Panc1 (cell line): ENCODE measurements at regions of chr13 and their contacts with region 1.

Region 1: GRCh38 chr13:20102525-20103180 is 58.2 kb downstream of the GJA3 start:
- DNase-seq: no peak
- ATAC-seq: no peak
- H3K4me3 ChIP-seq: no peak overlapping the region
- H3K27ac ChIP-seq: no peak overlapping the region
- H3K4me1 ChIP-seq: no peaks in the 10 kb centered on the region
- H3K27me3 ChIP-seq: no peaks in the 10 kb centered on the region
- CTCF ChIP-seq: no peak

Region 2: GRCh38 chr13:19888799-19889198 is 213.9 kb before region 1 on chr13:
- CTCF ChIA-PET with region 1: no interaction called
- POLR2A ChIA-PET with region 1: interaction called, 14 read pairs
- in situ Hi-C with region 1: no loop called
- intact Hi-C with region 1: no loop called
- DNase-seq: no peak
- ATAC-seq: no peak
- H3K4me3 ChIP-seq: no peak overlapping the region
- H3K27ac ChIP-seq: no peak overlapping the region
- H3K4me1 ChIP-seq: no peaks in the 10 kb centered on the region
- H3K27me3 ChIP-seq: no peaks in the 10 kb centered on the region
- CTCF ChIP-seq: no peak